Activated T-helper 1 cell treated with anti-CD3 and anti-CD28 coated beads, Interleukin-12 subunit alpha, Interleukin-12 subunit beta, Interleukin-2, Interleukin-4 antibody, amounts not matched to agents 30 ng/mL and 10 ng/mL and 1 ng/mL, durations not matched to agents 14 hours and 24 hours and 36 hours (primary cell): ENCODE measurements at regions of chr11 and their contacts with region 1.

Region 1: GRCh38 chr11:123381817-123382554 is 48.1 kb upstream of the GRAMD1B start:
- DNase-seq: peak; percentile 70
- H3K4me3 Mint-ChIP-seq: peak overlapping the region; percentile 62
- H3K27ac Mint-ChIP-seq: peak overlapping the region; percentile 79
- H3K4me1 Mint-ChIP-seq: peaks cover 49% of the 10 kb centered on the region
- H3K27me3 Mint-ChIP-seq: no peaks in the 10 kb centered on the region

Region 2: DNA sequence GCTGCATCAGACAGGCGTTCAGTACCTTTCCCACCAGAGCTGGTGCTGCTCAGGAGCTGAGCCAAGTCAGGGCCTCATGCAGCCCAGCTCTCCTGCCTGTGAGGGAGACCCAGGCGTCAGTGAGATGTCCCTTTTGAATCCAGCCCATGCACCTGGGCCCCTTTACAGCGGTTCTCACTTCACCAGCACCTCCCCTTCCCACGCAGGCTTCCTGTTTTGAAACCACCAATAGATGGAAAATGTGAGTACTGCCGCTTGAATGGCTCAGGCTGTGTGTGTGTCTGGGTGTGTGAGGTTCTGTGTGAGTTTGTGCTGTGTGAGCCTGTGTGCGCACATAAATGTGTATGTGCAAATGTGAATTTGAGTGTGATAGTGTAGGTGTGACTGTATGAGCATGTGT is 638.0 kb before region 1 on chr11:
- intact Hi-C with region 1: loop called (anchors 2 kb)
- DNase-seq: peak; percentile 75
- H3K4me3 Mint-ChIP-seq: no peak overlapping the region
- H3K27ac Mint-ChIP-seq: no peak overlapping the region
- H3K4me1 Mint-ChIP-seq: no peaks in the 10 kb centered on the region
- H3K27me3 Mint-ChIP-seq: peaks cover 18% of the 10 kb centered on the region

Region 3: DNA sequence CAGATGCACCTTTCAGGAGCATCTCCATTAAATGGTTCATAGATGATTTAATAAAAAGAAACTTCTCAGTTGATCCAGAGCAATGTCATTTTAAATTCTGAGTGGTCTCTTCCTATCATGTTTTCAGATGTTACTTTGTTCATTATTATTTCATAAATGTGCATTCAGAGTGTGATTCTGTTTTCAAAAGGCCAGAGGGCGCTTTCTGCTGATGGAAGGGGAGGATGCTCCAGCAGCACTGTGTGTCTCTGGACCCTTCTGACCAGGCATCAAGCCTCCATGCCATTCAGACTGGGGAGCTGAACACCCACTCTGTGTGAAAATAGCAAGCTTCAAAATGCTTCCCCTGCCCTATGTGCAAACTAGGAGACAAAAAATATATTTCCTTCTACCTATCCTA is 567.6 kb before region 1 on chr11:
- intact Hi-C with region 1: no loop called
- DNase-seq: no peak
- H3K4me3 Mint-ChIP-seq: no peak overlapping the region
- H3K27ac Mint-ChIP-seq: no peak overlapping the region
- H3K4me1 Mint-ChIP-seq: peaks cover 12% of the 10 kb centered on the region
- H3K27me3 Mint-ChIP-seq: peaks cover 2% of the 10 kb centered on the region

Region 4: GRCh38 chr11:123338330-123339005 is 43.5 kb before region 1 on chr11:
- intact Hi-C with region 1: loop called (anchors 1 kb)
- DNase-seq: no peak
- H3K4me3 Mint-ChIP-seq: no peak overlapping the region
- H3K27ac Mint-ChIP-seq: no peak overlapping the region
- H3K4me1 Mint-ChIP-seq: peaks cover 12% of the 10 kb centered on the region
- H3K27me3 Mint-ChIP-seq: peaks cover 9% of the 10 kb centered on the region

Region 5: GRCh38 chr11:123407130-123407995 is 25.4 kb after region 1 on chr11:
- intact Hi-C with region 1: loop called (anchors 1 kb)
- DNase-seq: peak; percentile 20
- H3K4me3 Mint-ChIP-seq: peak overlapping the region; percentile 77
- H3K27ac Mint-ChIP-seq: peak overlapping the region; percentile 90
- H3K4me1 Mint-ChIP-seq: peaks cover 70% of the 10 kb centered on the region
- H3K27me3 Mint-ChIP-seq: no peaks in the 10 kb centered on the region

Region 6: GRCh38 chr11:123454060-123454651 is 72.2 kb after region 1 on chr11:
- intact Hi-C with region 1: loop called (anchors 1 kb)
- DNase-seq: peak; percentile 74
- H3K4me3 Mint-ChIP-seq: peak overlapping the region; percentile 82
- H3K27ac Mint-ChIP-seq: peak overlapping the region; percentile 97
- H3K4me1 Mint-ChIP-seq: peaks cover 98% of the 10 kb centered on the region
- H3K27me3 Mint-ChIP-seq: no peaks in the 10 kb centered on the region

Region 7: GRCh38 chr11:123760894-123761293 is 378.9 kb after region 1 on chr11:
- intact Hi-C with region 1: loop called (anchors 2 kb)
- DNase-seq: no peak
- H3K4me3 Mint-ChIP-seq: peak overlapping the region; percentile 6
- H3K27ac Mint-ChIP-seq: peak overlapping the region; percentile 79
- H3K4me1 Mint-ChIP-seq: peaks cover 36% of the 10 kb centered on the region
- H3K27me3 Mint-ChIP-seq: peaks cover 14% of the 10 kb centered on the region